SK-N-SH (cell line): ENCODE measurements at regions of chr15 and their contacts with region 1.

Region 1: DNA sequence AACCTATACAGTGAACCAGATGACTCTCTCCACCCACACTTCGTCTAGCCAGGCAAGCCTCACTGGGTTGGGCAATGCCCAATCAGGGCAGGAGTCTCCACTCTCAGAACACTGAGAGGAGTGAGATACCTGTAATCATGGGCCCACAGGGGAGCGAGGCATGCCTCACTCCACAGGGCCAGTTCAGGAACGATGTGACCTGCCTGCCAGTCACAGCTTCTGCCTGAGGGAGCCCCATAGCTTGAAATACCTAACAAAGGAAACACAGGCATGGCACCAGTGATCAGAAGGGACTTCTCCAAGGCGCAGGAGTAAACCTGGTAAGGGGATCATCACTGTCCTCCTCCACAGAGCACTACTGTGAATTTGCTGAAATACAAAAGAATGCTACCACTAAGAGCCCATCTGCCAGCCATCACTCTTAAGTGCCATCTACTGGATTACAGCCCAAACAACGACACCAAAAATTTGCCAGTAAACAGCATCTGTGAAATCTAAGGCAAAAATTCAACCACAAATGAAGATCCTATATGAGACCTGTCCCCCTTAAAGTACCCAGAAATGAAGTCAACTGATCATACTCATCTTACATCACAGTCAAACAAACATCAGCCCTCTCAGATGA is 689.9 kb upstream of the SEMA6D start:
- DNase-seq: peak; percentile 5
- H3K4me3 ChIP-seq: no peak overlapping the region
- H3K27ac ChIP-seq: no peak overlapping the region
- H3K4me1 ChIP-seq: no peaks in the 10 kb centered on the region; a peak in 1 of 4 replicates
- H3K27me3 ChIP-seq: no peaks in the 10 kb centered on the region
- CTCF ChIP-seq: no peak
- EP300 ChIP-seq: no peak
- RAD21 ChIP-seq: peak; percentile 71

Region 2: GRCh38 chr15:47013446-47013845 is 14.0 kb before region 1 on chr15:
- CTCF ChIA-PET with region 1: no interaction called
- POLR2A ChIA-PET with region 1: no interaction called
- DNase-seq: no peak
- H3K4me3 ChIP-seq: no peak overlapping the region
- H3K27ac ChIP-seq: no peak overlapping the region
- H3K4me1 ChIP-seq: no peaks in the 10 kb centered on the region
- H3K27me3 ChIP-seq: no peaks in the 10 kb centered on the region
- CTCF ChIP-seq: no peak
- EP300 ChIP-seq: no peak
- RAD21 ChIP-seq: no peak

Region 3: GRCh38 chr15:47041301-47041700 is 13.9 kb after region 1 on chr15:
- CTCF ChIA-PET with region 1: interaction called, 17 read pairs
- POLR2A ChIA-PET with region 1: no interaction called
- DNase-seq: no peak
- H3K4me3 ChIP-seq: no peak overlapping the region
- H3K27ac ChIP-seq: no peak overlapping the region
- H3K4me1 ChIP-seq: no peaks in the 10 kb centered on the region
- H3K27me3 ChIP-seq: no peaks in the 10 kb centered on the region
- CTCF ChIP-seq: no peak
- EP300 ChIP-seq: no peak
- RAD21 ChIP-seq: no peak